Gastrocnemius medialis (tissue), 4 donors: ENCODE measurements at regions of chr18 and their contacts with region 1.

Region 1: DNA sequence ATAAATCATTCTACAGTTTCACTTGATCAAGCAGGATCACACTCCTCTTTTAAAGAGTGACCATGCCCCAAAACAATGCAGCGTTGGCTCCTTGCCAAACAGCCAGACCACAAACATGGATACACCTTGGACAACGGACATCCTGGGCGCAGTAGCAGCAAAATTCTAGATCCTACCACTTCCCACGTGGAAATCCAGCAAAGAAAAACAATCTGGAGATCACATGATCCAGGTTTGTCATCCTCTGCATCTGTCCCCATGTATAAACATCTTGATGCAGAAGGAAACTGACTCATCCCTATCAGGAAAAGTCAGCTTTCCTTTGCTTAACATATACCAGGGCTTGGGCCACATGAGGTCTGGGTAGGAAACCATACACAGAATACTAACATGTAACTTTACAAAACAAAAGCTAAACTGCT is 53.1 kb downstream of the ZNF521 start:
- DNase-seq: peak; percentile 55 to 64
- ATAC-seq: peak; percentile 88 to 98
- H3K4me3 ChIP-seq: no peak overlapping the region
- H3K27ac ChIP-seq: peak overlapping the region; percentile 63 to 73 (median 70)
- H3K4me1 ChIP-seq: peaks cover 23 to 24% of the 10 kb centered on the region in 2 donors
- H3K27me3 ChIP-seq: no peaks in the 10 kb centered on the region
- CTCF ChIP-seq: no peak
- POLR2A ChIP-seq: no peak

Region 2: DNA sequence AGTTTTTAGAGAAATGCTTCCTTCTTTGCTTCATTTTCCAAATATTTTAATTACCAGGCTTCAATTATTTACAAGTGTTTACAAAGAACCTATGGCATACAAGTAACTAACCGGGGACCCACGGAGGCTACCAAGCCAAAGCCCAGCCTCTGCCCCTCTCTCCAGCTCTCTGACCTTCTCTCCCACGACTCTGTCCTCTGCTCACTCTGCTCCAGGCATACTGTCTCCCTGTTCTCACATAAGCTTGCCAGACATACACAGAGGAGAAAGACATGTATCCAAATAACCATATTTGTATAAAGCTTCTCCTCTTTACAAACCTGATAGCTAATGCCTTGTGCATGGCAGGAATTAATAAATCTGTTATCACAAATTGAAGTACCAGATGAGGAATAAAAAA is 88.2 kb before region 1 on chr18:
- in situ Hi-C with region 1: no loop called
- intact Hi-C with region 1: no loop called
- DNase-seq: no peak
- ATAC-seq: no peak
- H3K4me3 ChIP-seq: no peak overlapping the region
- H3K27ac ChIP-seq: no peak overlapping the region
- H3K4me1 ChIP-seq: no peaks in the 10 kb centered on the region
- H3K27me3 ChIP-seq: no peaks in the 10 kb centered on the region
- CTCF ChIP-seq: no peak
- POLR2A ChIP-seq: no peak

Region 3: GRCh38 chr18:25230658-25231326 is 68.1 kb before region 1 on chr18:
- in situ Hi-C with region 1: no loop called
- intact Hi-C with region 1: loop called (anchors 5 kb)
- DNase-seq: peak; percentile 68 to 78
- ATAC-seq: peak; percentile 94 to 95
- H3K4me3 ChIP-seq: peak overlapping the region in 2 of 4 donors; percentile 20 to 21
- H3K27ac ChIP-seq: peak overlapping the region; percentile 57 to 72 (median 68)
- H3K4me1 ChIP-seq: peaks cover 33% of the 10 kb centered on the region in 2 donors
- H3K27me3 ChIP-seq: no peaks in the 10 kb centered on the region
- CTCF ChIP-seq: no peak
- POLR2A ChIP-seq: no peak